Common myeloid progenitor, CD34-positive (primary cell): ENCODE measurements at regions of chr17 and their contacts with region 1.

Region 1: DNA sequence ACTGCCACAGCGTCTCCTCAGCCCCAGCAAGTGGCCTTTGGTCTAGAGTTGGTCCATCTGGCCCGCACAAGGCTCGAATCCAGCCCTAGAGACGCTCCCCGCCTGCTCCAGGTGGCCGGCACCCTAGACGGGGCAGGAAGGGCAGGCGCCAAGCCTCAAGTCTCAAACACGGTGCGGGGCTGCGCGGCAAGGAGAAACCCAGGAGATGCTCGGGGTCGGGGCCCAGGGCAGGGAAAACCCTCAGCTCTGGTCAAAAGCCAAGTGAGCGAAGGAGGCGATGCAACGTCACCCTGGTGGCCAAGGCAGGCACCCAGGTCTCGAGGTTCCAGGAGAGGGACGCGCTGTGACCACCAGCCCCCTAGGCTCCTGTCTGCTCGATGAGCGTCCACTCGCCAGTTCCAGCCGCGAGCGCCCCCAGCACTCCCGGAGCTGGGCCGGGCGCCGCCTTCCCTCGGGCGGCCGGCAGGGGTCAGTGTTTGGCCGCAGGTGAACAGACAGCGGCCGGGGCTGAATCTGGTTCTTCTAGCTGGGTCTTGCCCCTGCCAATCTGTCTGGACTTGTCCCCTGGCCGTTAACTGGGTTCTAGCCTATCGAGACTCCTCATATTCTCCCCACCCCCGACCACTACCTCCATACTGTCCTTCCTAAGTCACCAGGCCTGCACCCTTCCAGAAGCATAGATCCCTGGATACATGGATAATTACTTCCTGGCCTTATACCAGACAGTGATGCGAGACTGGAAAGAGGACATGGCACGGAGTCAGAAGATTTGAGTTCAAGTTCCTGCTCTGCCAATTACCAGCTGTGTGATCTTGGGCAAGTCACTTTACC is 44.0 kb downstream of the PRAC1 start:
- DNase-seq: peak; percentile 51 to 70 (median 65)
- H3K4me3 ChIP-seq: peak overlapping the region in 3 of 7 experiments; percentile 26 to 63 (median 30)
- H3K27ac ChIP-seq: no peak overlapping the region
- H3K4me1 ChIP-seq: peaks cover 0 to 4% (median 0%) of the 10 kb centered on the region in 4 experiments
- H3K27me3 ChIP-seq: peaks cover 3 to 62% (median 21%) of the 10 kb centered on the region in 5 experiments

Region 2: GRCh38 chr17:48577946-48578615 is 100.3 kb before region 1 on chr17 and contains the start of gene HOXB4:
- CTCF ChIA-PET with region 1: no interaction called
- POLR2A ChIA-PET with region 1: no interaction called
- DNase-seq: peak; percentile 79 to 85 (median 84)
- H3K4me3 ChIP-seq: peak within 1 kb of the TSS; percentile 50 to 86 (median 75)
- H3K27ac ChIP-seq: peak within 1 kb of the TSS; percentile 54 to 91
- H3K4me1 ChIP-seq: peaks cover 7 to 88% (median 75%) of the 10 kb centered on the region in 4 experiments
- H3K27me3 ChIP-seq: no peaks in the 10 kb centered on the region

Region 3: GRCh38 chr17:48593840-48594537 is 84.4 kb before region 1 on chr17:
- CTCF ChIA-PET with region 1: no interaction called
- POLR2A ChIA-PET with region 1: no interaction called
- DNase-seq: peak; percentile 82 to 86 (median 86)
- H3K4me3 ChIP-seq: peak overlapping the region in 6 of 7 experiments; percentile 43 to 97 (median 74)
- H3K27ac ChIP-seq: no peak overlapping the region
- H3K4me1 ChIP-seq: peaks cover 4 to 83% (median 61%) of the 10 kb centered on the region in 4 experiments
- H3K27me3 ChIP-seq: peaks cover 0 to 32% (median 4%) of the 10 kb centered on the region in 5 experiments

Region 4: GRCh38 chr17:48636177-48637018 is 42.0 kb before region 1 on chr17:
- CTCF ChIA-PET with region 1: interaction called, 11 read pairs
- POLR2A ChIA-PET with region 1: no interaction called
- DNase-seq: peak; percentile 91 to 92 (median 91)
- H3K4me3 ChIP-seq: peak overlapping the region in 2 of 7 experiments; percentile 8 to 42
- H3K27ac ChIP-seq: no peak overlapping the region
- H3K4me1 ChIP-seq: peaks cover 0 to 14% (median 6%) of the 10 kb centered on the region in 4 experiments
- H3K27me3 ChIP-seq: peaks cover 6 to 97% (median 67%) of the 10 kb centered on the region in 5 experiments

Region 5: GRCh38 chr17:48663134-48663924 is 15.0 kb before region 1 on chr17:
- CTCF ChIA-PET with region 1: interaction called, 12 read pairs
- POLR2A ChIA-PET with region 1: no interaction called
- DNase-seq: no peak
- H3K4me3 ChIP-seq: no peak overlapping the region
- H3K27ac ChIP-seq: no peak overlapping the region
- H3K4me1 ChIP-seq: no peaks in the 10 kb centered on the region
- H3K27me3 ChIP-seq: peaks cover 2 to 16% (median 2%) of the 10 kb centered on the region in 5 experiments

Region 6: DNA sequence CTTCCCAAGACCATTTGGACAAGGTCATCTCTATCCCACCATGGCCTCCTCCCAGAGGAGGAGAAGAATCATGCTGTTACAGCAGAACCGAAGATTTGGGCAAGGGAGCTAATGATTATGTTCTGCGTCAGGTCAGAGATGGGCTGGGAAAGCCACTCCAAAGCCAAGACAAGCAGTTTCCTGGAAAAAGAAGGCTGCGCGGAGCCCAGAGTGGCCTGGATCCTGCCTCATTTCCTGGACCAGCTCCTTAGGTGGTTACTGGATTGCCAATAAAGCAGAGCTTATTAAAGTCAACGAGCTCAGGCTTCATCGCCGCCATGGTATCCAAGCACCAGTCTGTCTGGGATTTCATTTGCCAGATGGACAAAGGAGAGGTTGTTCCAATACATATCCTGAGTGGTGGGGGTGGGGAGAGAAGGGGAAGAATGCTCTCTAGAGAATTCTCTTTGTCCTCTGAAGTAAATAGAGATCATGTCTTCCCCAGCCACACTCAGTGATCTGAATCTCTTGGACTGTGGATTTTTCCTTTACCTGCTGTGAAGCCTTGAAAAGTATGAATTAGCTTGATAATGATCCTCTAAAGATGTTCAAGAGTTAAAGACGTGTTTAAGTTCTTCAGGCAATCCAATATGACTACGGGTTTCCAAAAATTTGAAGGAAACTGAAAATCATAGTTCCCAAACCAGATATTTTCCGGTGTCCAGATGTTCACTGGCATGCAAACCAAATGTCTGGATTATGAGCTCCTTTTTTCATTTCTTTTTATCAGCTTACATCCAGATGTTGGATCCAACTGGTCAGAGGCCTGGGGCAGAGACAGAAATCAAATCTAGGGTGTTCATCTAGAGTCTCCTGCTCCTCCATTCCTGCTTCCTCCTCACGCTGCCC is 26.2 kb after region 1 on chr17:
- CTCF ChIA-PET with region 1: interaction called, 17 read pairs
- POLR2A ChIA-PET with region 1: no interaction called
- DNase-seq: no peak
- H3K4me3 ChIP-seq: no peak overlapping the region
- H3K27ac ChIP-seq: no peak overlapping the region
- H3K4me1 ChIP-seq: no peaks in the 10 kb centered on the region
- H3K27me3 ChIP-seq: peaks cover 9 to 79% (median 29%) of the 10 kb centered on the region in 5 experiments

Region 7: GRCh38 chr17:48791128-48792032 is 113.0 kb after region 1 on chr17:
- CTCF ChIA-PET with region 1: interaction called, 35 read pairs
- POLR2A ChIA-PET with region 1: no interaction called
- DNase-seq: peak; percentile 60 to 66 (median 65)
- H3K4me3 ChIP-seq: no peak overlapping the region
- H3K27ac ChIP-seq: no peak overlapping the region
- H3K4me1 ChIP-seq: peaks cover 0 to 11% (median 1%) of the 10 kb centered on the region in 4 experiments
- H3K27me3 ChIP-seq: peaks cover 0 to 68% (median 22%) of the 10 kb centered on the region in 5 experiments

Region 8: GRCh38 chr17:48804925-48805411 is 126.6 kb after region 1 on chr17:
- CTCF ChIA-PET with region 1: interaction called, 14 read pairs
- POLR2A ChIA-PET with region 1: no interaction called
- DNase-seq: peak; percentile 47 to 69 (median 59)
- H3K4me3 ChIP-seq: no peak overlapping the region
- H3K27ac ChIP-seq: no peak overlapping the region
- H3K4me1 ChIP-seq: peaks cover 0 to 8% (median 5%) of the 10 kb centered on the region in 4 experiments
- H3K27me3 ChIP-seq: peaks cover 0 to 18% (median 1%) of the 10 kb centered on the region in 5 experiments

Region 9: GRCh38 chr17:48878918-48879898 is 200.9 kb after region 1 on chr17:
- CTCF ChIA-PET with region 1: interaction called, 13 read pairs
- POLR2A ChIA-PET with region 1: no interaction called
- DNase-seq: peak; percentile 76 to 90 (median 81)
- H3K4me3 ChIP-seq: no peak overlapping the region
- H3K27ac ChIP-seq: no peak overlapping the region
- H3K4me1 ChIP-seq: peaks cover 0 to 3% (median 2%) of the 10 kb centered on the region in 4 experiments
- H3K27me3 ChIP-seq: peaks cover 0 to 1% (median 0%) of the 10 kb centered on the region in 5 experiments

Region 10: GRCh38 chr17:48925991-48926342 is 247.6 kb after region 1 on chr17:
- CTCF ChIA-PET with region 1: no interaction called
- POLR2A ChIA-PET with region 1: no interaction called
- DNase-seq: no peak
- H3K4me3 ChIP-seq: no peak overlapping the region
- H3K27ac ChIP-seq: no peak overlapping the region
- H3K4me1 ChIP-seq: no peaks in the 10 kb centered on the region
- H3K27me3 ChIP-seq: no peaks in the 10 kb centered on the region